Dendritic cell treated with granulocyte-macrophage colony-stimulating factor and Interleukin-4, amounts not matched to agents 40 ng/mL and 50 ng/mL, for 4 days (primary cell): ENCODE measurements at regions of chr2 and their contacts with region 1.

Region 1: GRCh38 chr2:182980115-182980514 is 58.1 kb downstream of the NCKAP1 start:
- H3K4me3 Mint-ChIP-seq: no peak overlapping the region
- H3K27ac Mint-ChIP-seq: no peak overlapping the region
- H3K4me1 Mint-ChIP-seq: no peaks in the 10 kb centered on the region
- H3K27me3 Mint-ChIP-seq: no peaks in the 10 kb centered on the region

Region 2: DNA sequence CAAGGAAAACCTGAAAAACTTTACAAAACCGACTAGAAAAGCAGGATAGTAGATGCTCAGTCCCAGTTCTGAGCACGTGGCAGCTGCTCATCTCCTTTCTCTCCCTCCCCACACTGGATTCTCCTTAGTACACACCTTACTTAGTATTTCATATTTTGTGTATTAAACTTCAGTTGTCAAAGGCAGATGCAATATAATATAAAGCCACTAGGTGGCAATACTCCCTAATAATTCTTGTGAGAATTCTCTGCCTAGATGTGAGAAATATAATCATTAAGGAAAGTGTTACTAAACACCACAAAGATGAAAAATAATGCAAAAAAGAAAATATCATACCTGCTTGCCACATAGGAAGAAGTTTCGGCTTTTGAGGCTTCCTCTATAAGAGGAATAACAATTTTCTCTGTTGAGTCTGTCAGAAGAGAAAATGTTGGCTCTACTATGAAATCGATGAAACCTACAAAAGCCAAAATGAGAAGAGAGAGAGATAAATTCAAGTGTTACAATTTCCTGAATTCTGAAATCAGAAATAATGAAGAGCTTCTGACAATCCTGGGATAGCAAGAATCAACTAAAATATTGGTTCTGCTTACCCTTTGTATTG is 793.9 kb before region 1 on chr2:
- intact Hi-C with region 1: loop called (anchors 1 kb)
- H3K4me3 Mint-ChIP-seq: no peak overlapping the region
- H3K27ac Mint-ChIP-seq: no peak overlapping the region
- H3K4me1 Mint-ChIP-seq: no peaks in the 10 kb centered on the region
- H3K27me3 Mint-ChIP-seq: no peaks in the 10 kb centered on the region

Region 3: DNA sequence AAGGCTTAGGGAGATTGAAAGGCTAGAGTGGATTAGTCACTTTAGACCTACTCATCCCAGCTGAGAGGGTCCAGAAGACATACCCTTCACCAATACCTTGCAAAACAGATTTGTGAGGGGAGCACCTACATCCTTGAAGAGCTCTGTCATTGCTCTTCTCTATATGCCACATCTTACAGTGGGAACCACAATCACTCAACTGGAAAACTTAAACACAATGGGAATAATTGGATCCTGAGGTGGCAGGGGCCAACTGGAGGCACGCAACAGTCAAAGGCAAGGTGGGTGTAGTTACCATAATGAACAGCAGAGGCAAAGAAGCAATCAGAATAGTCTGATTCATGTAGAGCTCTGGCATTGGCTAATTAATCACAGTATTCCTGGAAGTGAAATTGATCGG is 588.7 kb before region 1 on chr2:
- intact Hi-C with region 1: no loop called
- H3K4me3 Mint-ChIP-seq: no peak overlapping the region
- H3K27ac Mint-ChIP-seq: no peak overlapping the region
- H3K4me1 Mint-ChIP-seq: no peaks in the 10 kb centered on the region
- H3K27me3 Mint-ChIP-seq: no peaks in the 10 kb centered on the region

Region 4: DNA sequence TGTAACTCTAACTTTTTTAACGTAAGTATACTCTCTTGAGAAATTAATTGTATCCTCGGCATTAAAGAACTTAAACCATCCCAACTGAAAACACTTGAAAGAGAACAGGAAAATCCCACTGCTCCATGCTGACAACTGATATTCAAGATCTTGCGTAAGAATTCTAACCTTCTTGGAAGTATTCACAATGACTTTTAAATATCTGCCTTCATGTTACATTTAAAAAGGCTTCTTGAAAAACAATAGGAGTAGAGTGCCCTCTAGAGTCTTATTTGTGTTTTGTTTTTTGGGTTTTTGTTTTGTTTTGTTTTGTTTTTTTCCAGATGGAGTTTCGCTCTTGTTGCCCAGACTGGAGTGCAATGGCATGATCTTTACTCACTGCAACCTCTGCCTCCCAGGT is 329.4 kb before region 1 on chr2:
- intact Hi-C with region 1: loop called (anchors 10 kb)
- H3K4me3 Mint-ChIP-seq: no peak overlapping the region
- H3K27ac Mint-ChIP-seq: no peak overlapping the region
- H3K4me1 Mint-ChIP-seq: no peaks in the 10 kb centered on the region
- H3K27me3 Mint-ChIP-seq: no peaks in the 10 kb centered on the region

Region 5: GRCh38 chr2:182763311-182763912 is 216.7 kb before region 1 on chr2:
- intact Hi-C with region 1: loop called (anchors 10 kb)
- H3K4me3 Mint-ChIP-seq: no peak overlapping the region
- H3K27ac Mint-ChIP-seq: no peak overlapping the region
- H3K4me1 Mint-ChIP-seq: peaks cover 11% of the 10 kb centered on the region
- H3K27me3 Mint-ChIP-seq: no peaks in the 10 kb centered on the region